Endothelial cell of umbilical vein (primary cell): ENCODE measurements at regions of chr10 and their contacts with region 1.

Region 1: GRCh38 chr10:79242620-79243152 is 104.6 kb upstream of the PPIF start:
- DNase-seq: peak; percentile 71
- H3K4me3 ChIP-seq: peak overlapping the region; percentile 29 to 44 (median 44)
- H3K27ac ChIP-seq: peak overlapping the region; percentile 49
- H3K4me1 ChIP-seq: peaks cover 62% of the 10 kb centered on the region
- H3K27me3 ChIP-seq: no peaks in the 10 kb centered on the region
- CTCF ChIP-seq: no peak
- POLR2A ChIP-seq: no peak

Region 2: GRCh38 chr10:78038105-78038504 is 1204.6 kb before region 1 on chr10:
- CTCF ChIA-PET with region 1: no interaction called
- POLR2A ChIA-PET with region 1: no interaction called
- dilution Hi-C with region 1: no loop called
- intact Hi-C with region 1: loop called (anchors 5 kb)
- DNase-seq: peak; percentile 40
- H3K4me3 ChIP-seq: no peak overlapping the region
- H3K27ac ChIP-seq: no peak overlapping the region
- H3K4me1 ChIP-seq: peaks cover 55% of the 10 kb centered on the region
- H3K27me3 ChIP-seq: no peaks in the 10 kb centered on the region
- CTCF ChIP-seq: no peak
- POLR2A ChIP-seq: peak; percentile 15

Region 3: GRCh38 chr10:78925800-78926319 is 316.8 kb before region 1 on chr10:
- CTCF ChIA-PET with region 1: no interaction called
- POLR2A ChIA-PET with region 1: no interaction called
- dilution Hi-C with region 1: no loop called
- intact Hi-C with region 1: no loop called
- DNase-seq: no peak
- H3K4me3 ChIP-seq: no peak overlapping the region
- H3K27ac ChIP-seq: no peak overlapping the region
- H3K4me1 ChIP-seq: no peaks in the 10 kb centered on the region
- H3K27me3 ChIP-seq: peaks cover 1 to 2% of the 10 kb centered on the region in 2 experiments
- CTCF ChIP-seq: no peak
- POLR2A ChIP-seq: no peak

Region 4: GRCh38 chr10:79202188-79203013 is 40.3 kb before region 1 on chr10:
- CTCF ChIA-PET with region 1: interaction called, 5 read pairs
- POLR2A ChIA-PET with region 1: no interaction called
- dilution Hi-C with region 1: no loop called
- intact Hi-C with region 1: loop called (anchors 2 kb)
- DNase-seq: peak; percentile 55
- H3K4me3 ChIP-seq: no peak overlapping the region
- H3K27ac ChIP-seq: no peak overlapping the region
- H3K4me1 ChIP-seq: no peaks in the 10 kb centered on the region
- H3K27me3 ChIP-seq: no peaks in the 10 kb centered on the region
- CTCF ChIP-seq: peak; percentile 77 to 84
- POLR2A ChIP-seq: no peak

Region 5: GRCh38 chr10:79286318-79286951 is 43.7 kb after region 1 on chr10:
- CTCF ChIA-PET with region 1: interaction called, 3 read pairs
- POLR2A ChIA-PET with region 1: no interaction called
- dilution Hi-C with region 1: no loop called
- intact Hi-C with region 1: loop called (anchors 1 kb)
- DNase-seq: peak; percentile 76
- H3K4me3 ChIP-seq: no peak overlapping the region
- H3K27ac ChIP-seq: peak overlapping the region; percentile 56
- H3K4me1 ChIP-seq: peaks cover 17% of the 10 kb centered on the region
- H3K27me3 ChIP-seq: no peaks in the 10 kb centered on the region
- CTCF ChIP-seq: no peak
- POLR2A ChIP-seq: no peak

Region 6: GRCh38 chr10:79347226-79347893 is 104.7 kb after region 1 on chr10 and contains the start of gene PPIF:
- CTCF ChIA-PET with region 1: no interaction called
- POLR2A ChIA-PET with region 1: no interaction called
- dilution Hi-C with region 1: no loop called
- intact Hi-C with region 1: loop called (anchors 5 kb)
- DNase-seq: peak; percentile 93
- H3K4me3 ChIP-seq: peak within 1 kb of the TSS; percentile 66 to 74 (median 72)
- H3K27ac ChIP-seq: peak within 1 kb of the TSS; percentile 74
- H3K4me1 ChIP-seq: peaks cover 11% of the 10 kb centered on the region
- H3K27me3 ChIP-seq: no peaks in the 10 kb centered on the region
- CTCF ChIP-seq: peak; percentile 88 to 94
- POLR2A ChIP-seq: peak; percentile 53
- total RNA-seq, gene PPIF: 42.7 and 51.2 TPM in 2 replicates

Region 7: GRCh38 chr10:79358783-79359182 is 116.1 kb after region 1 on chr10:
- CTCF ChIA-PET with region 1: no interaction called
- POLR2A ChIA-PET with region 1: no interaction called
- dilution Hi-C with region 1: no loop called
- intact Hi-C with region 1: no loop called
- DNase-seq: no peak
- H3K4me3 ChIP-seq: no peak overlapping the region
- H3K27ac ChIP-seq: no peak overlapping the region
- H3K4me1 ChIP-seq: no peaks in the 10 kb centered on the region
- H3K27me3 ChIP-seq: peaks cover 5 to 6% of the 10 kb centered on the region in 2 experiments
- CTCF ChIP-seq: no peak
- POLR2A ChIP-seq: no peak

Region 8: DNA sequence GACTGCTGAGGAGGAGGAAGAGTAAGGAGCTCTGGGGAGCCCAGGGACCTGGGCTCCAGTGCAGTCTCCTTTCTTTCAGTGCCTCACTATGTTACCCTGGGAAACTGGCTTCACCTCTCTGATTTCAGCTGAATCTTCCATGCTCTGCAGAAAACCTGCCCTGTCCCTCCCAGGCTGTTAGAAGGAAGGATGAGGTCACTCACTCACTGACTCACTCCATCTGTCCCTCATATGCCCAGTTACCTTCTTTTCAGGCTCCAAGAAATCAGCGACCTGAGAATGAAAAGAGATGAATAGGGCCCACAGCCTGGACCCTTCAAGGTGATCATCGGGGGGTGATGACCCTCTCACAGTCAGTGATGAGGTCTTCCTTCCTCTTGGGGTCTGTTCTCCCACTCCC is 317.0 kb after region 1 on chr10:
- CTCF ChIA-PET with region 1: no interaction called
- POLR2A ChIA-PET with region 1: no interaction called
- dilution Hi-C with region 1: no loop called
- intact Hi-C with region 1: no loop called
- DNase-seq: no peak
- H3K4me3 ChIP-seq: no peak overlapping the region
- H3K27ac ChIP-seq: no peak overlapping the region
- H3K4me1 ChIP-seq: no peaks in the 10 kb centered on the region
- H3K27me3 ChIP-seq: peaks cover 0 to 4% of the 10 kb centered on the region in 2 experiments
- CTCF ChIP-seq: no peak
- POLR2A ChIP-seq: no peak